ENCODE measurements at regions of chr1 and their contacts with region 1.

Region 1: DNA sequence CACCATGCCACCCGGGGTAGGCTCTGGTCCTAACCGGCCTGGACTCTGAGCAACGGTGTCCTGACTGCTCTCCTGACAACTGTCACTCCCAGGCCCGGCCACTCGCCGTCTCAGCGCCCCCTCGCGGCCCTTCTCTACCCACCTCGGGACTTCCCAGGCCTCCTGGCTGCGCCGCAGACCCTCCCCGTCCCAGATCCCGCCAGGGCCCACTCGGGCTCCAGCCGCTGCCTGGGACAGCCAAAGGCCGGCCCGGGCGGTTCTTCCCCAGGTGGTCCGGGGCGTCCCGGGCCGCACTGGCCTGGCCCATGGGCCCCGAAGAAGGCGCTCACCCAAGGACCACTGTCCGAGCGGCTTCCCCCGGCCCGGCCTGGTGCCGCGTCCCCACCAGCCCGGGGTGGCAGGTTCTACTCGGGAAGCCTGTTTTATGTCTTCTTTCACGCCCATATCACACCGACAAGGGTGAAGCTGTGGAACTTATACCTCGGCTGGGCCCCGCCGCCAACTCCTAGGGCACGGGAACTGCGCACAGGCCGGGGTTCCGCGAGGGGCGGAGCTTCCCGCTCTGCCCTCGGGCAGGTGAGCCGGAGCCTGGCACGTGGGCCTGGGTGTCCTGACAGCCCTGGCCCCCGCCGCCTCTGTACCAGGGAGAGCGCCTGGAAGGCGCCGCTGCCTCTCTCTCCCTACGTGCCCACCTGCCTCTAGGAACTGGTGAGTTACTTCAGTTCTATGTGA is 138.3 kb downstream of the TTLL7 start:
- DNase-seq: peak; percentile 27
- ATAC-seq: peak; percentile 100
- H3K4me3 ChIP-seq: no peak overlapping the region; a peak in 1 of 6 replicates
- H3K27ac ChIP-seq: no peak overlapping the region
- H3K4me1 ChIP-seq: no peaks in the 10 kb centered on the region
- H3K27me3 ChIP-seq: no peaks in the 10 kb centered on the region; a peak in 1 of 5 replicates
- CTCF ChIP-seq: peak; percentile 75
- EP300 ChIP-seq: no peak
- POLR2A ChIP-seq: no peak
- RAD21 ChIP-seq: peak; percentile 41; the same call in 1 of the 2 replicates

Region 2: GRCh38 chr1:82775402-82776000 is 1085.2 kb before region 1 on chr1:
- CTCF ChIA-PET with region 1: no interaction called
- POLR2A ChIA-PET with region 1: no interaction called
- in situ Hi-C with region 1: no loop called
- intact Hi-C with region 1: loop called (anchors 5 kb)
- DNase-seq: peak; percentile 3
- ATAC-seq: peak; percentile 43; the same call in 1 of the 3 replicates
- H3K4me3 ChIP-seq: no peak overlapping the region
- H3K27ac ChIP-seq: no peak overlapping the region
- H3K4me1 ChIP-seq: no peaks in the 10 kb centered on the region
- H3K27me3 ChIP-seq: no peaks in the 10 kb centered on the region
- CTCF ChIP-seq: peak; percentile 49
- EP300 ChIP-seq: no peak
- POLR2A ChIP-seq: no peak
- RAD21 ChIP-seq: no peak

Region 3: DNA sequence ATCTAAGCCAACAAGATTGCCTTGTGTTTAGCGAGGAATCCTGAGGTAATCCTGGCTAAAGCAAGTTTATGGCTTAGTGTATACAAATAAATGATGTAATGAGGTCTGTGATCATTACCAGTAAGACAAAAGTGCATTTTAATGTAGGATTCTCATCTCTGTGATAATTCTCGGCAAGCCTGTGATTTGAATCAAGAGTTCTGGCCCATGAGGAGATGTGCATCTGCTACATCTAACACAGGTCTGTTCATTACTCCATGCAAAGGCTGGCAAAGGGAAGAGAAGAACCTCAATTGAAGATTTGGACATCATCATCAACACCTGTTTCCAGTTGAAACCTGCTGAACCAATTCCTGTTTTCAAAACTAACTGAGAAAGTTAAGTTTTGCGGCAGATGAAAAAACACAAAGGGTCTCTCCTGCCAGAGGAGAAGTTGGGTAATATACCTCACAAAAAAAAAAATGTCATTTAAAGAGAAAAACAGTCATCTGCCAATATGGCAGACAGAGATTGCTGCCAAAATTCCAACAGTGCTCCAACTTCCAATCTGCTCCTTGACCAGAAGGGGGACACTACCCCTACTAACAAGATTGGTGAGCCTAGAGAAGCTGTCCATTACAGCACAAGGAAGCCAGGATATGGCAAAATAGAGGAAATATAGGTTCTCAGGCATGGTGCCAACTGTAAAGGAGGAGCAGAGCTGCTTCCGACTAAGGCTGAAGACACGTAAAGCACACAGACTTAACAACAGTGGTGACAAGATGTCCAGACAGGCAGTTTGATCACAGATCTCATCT is 315.4 kb before region 1 on chr1:
- CTCF ChIA-PET with region 1: no interaction called
- POLR2A ChIA-PET with region 1: no interaction called
- in situ Hi-C with region 1: no loop called
- intact Hi-C with region 1: loop called (anchors 2 kb)
- DNase-seq: no peak
- ATAC-seq: no peak
- H3K4me3 ChIP-seq: no peak overlapping the region
- H3K27ac ChIP-seq: no peak overlapping the region
- H3K4me1 ChIP-seq: no peaks in the 10 kb centered on the region
- H3K27me3 ChIP-seq: no peaks in the 10 kb centered on the region; a peak in 1 of 5 replicates
- CTCF ChIP-seq: no peak
- EP300 ChIP-seq: no peak
- POLR2A ChIP-seq: no peak
- RAD21 ChIP-seq: no peak

Region 4: GRCh38 chr1:83827741-83828522 is 32.7 kb before region 1 on chr1:
- CTCF ChIA-PET with region 1: no interaction called
- POLR2A ChIA-PET with region 1: no interaction called
- in situ Hi-C with region 1: no loop called
- intact Hi-C with region 1: loop called (anchors 1 kb)
- DNase-seq: no peak
- ATAC-seq: no peak
- H3K4me3 ChIP-seq: no peak overlapping the region
- H3K27ac ChIP-seq: no peak overlapping the region
- H3K4me1 ChIP-seq: no peaks in the 10 kb centered on the region
- H3K27me3 ChIP-seq: no peaks in the 10 kb centered on the region
- CTCF ChIP-seq: no peak
- EP300 ChIP-seq: no peak
- POLR2A ChIP-seq: no peak
- RAD21 ChIP-seq: no peak

Region 5: DNA sequence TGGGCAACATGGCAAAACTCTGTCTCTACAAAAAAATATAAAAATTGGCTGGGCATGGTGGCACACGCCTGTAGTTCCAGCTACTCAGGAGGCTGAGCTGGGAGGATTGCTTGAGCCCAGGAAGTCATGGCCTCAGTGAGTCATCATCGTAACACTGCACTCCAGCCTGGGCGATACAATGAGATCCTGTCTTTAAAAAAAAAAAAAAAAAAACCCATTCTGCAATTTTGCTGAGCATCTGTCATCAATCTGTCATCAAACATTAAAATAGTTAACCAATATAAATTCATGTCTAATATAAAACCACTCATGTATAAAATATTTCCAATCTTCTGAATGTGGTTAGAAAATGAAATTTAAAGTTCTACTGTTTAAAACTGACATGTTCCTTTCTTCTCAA is 975.5 kb after region 1 on chr1:
- CTCF ChIA-PET with region 1: no interaction called
- POLR2A ChIA-PET with region 1: no interaction called
- in situ Hi-C with region 1: no loop called
- intact Hi-C with region 1: no loop called
- DNase-seq: no peak
- ATAC-seq: no peak
- H3K4me3 ChIP-seq: no peak overlapping the region
- H3K27ac ChIP-seq: no peak overlapping the region
- H3K4me1 ChIP-seq: no peaks in the 10 kb centered on the region
- H3K27me3 ChIP-seq: no peaks in the 10 kb centered on the region
- CTCF ChIP-seq: no peak
- EP300 ChIP-seq: no peak
- POLR2A ChIP-seq: no peak
- RAD21 ChIP-seq: no peak

Measured in HepG2 (cell line).